ENCODE measurements at regions of chr19 and their contacts with region 1.

Region 1: DNA sequence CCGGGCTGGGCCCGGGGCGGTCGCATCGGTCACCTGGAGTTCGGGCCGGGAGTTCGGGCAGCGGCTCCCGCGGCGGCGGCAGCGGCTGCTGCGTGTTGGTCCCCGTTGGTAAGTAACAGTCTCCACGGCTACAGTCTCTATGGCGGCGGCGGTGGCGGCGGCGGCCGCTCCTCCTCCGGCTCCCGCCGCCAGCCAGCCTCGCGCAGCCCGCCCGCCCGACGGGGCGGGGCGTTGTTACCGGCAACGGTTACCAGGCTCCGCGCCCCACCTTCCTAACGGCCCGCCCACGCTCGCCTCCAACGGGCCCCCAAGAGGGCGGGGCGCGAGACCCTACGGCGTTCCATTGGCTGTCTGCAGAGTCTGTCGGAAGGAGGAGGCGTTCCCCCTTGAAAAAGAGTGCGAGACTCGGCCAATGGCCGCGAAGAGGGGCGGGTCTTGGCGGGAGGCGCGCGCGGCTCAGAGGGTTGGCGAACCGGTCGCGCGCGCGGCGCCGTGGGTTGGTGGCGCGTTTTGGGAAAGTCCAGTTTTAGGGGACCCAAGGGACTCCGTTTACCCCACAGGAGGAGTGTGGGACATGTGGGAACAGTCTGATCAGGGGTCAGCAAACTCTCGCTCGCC is at the start of gene RFX2:
- DNase-seq: peak; percentile 98
- ATAC-seq: peak; percentile 100
- H3K4me3 ChIP-seq: peak within 1 kb of the TSS; percentile 65 to 81 (median 73)
- H3K27ac ChIP-seq: peak within 1 kb of the TSS; percentile 57 to 69 (median 64)
- H3K4me1 ChIP-seq: peaks cover 10 to 16% of the 10 kb centered on the region in 2 donors
- H3K27me3 ChIP-seq: peaks cover 0 to 15% (median 0%) of the 10 kb centered on the region in 3 donors
- CTCF ChIP-seq: no peak
- POLR2A ChIP-seq: peak; percentile 38 to 41
- total RNA-seq, gene RFX2: 0.31 to 10.5 (median 2.2) TPM

Region 2: DNA sequence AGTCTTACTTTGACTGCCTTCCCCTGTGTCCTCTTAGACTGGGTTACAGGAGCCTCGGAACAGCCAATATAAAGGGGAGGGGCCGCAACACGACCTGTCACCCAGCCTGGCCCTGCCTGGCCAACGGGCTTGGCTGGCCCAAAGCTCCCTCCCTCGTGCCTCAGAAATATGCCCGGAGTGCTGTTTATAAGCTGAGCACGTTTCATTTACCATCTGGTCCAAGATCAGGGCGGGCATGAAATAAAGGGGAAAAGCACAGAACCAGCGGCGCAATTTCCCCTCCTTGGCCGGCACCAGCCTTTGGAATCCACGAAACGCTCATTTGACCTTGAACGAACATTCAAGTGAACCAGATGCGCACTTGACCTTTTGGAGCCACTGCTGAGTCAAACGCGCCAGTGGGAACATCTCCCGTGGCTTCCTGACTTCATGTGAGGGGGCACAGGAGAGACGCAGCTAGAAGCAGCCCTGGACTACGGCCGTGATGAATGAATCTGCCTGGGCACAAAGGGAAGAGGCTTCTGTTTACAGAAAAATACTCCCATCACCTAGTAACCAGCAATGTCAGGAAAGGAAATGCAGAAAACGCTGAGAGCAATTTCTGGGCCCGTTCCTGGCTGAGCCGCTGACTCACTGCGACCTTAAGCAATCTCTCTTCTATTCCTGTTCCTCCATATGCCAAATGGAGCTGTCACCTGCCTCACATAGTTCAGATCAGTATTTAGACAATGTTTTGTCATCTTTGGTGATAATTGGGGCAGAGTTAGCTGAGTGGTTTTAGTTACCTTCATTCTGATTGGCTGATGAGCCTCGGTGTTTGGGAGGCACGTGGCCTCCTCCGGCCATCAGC is 53.4 kb before region 1 on chr19:
- in situ Hi-C with region 1: no loop called
- intact Hi-C with region 1: loop called (anchors 1 kb)
- DNase-seq: peak; percentile 70 to 81
- ATAC-seq: peak; percentile 95
- H3K4me3 ChIP-seq: peak overlapping the region; percentile 29 to 54 (median 47)
- H3K27ac ChIP-seq: peak overlapping the region; percentile 82 to 91 (median 87)
- H3K4me1 ChIP-seq: peaks cover 27 to 32% of the 10 kb centered on the region in 2 donors
- H3K27me3 ChIP-seq: no peaks in the 10 kb centered on the region
- CTCF ChIP-seq: no peak
- POLR2A ChIP-seq: peak in 1 of 2 donors; percentile 9

Measured in gastrocnemius medialis (tissue), 4 donors.